ENCODE measurements at regions of chr1 and their contacts with region 1.

Region 1: GRCh38 chr1:26787706-26788514 is at the start of gene PIGV:
- DNase-seq: peak; percentile 90
- H3K4me3 ChIP-seq: peak within 1 kb of the TSS; percentile 51 to 76 (median 52)
- H3K27ac ChIP-seq: peak within 1 kb of the TSS; percentile 69
- H3K4me1 ChIP-seq: peaks cover 48% of the 10 kb centered on the region
- H3K27me3 ChIP-seq: no peaks in the 10 kb centered on the region
- CTCF ChIP-seq: peak in 1 of 2 donors; percentile 23
- POLR2A ChIP-seq: peak; percentile 91
- total RNA-seq, gene PIGV: 6.0 and 7.5 TPM in 2 replicates

Region 2: GRCh38 chr1:26233903-26234643 is 553.8 kb before region 1 on chr1 and contains the start of gene CEP85:
- CTCF ChIA-PET with region 1: no interaction called
- POLR2A ChIA-PET with region 1: no interaction called
- dilution Hi-C with region 1: no loop called
- intact Hi-C with region 1: no loop called
- DNase-seq: peak; percentile 98
- H3K4me3 ChIP-seq: peak within 1 kb of the TSS; percentile 35 to 78 (median 65)
- H3K27ac ChIP-seq: peak within 1 kb of the TSS; percentile 9
- H3K4me1 ChIP-seq: peaks cover 12% of the 10 kb centered on the region
- H3K27me3 ChIP-seq: no peaks in the 10 kb centered on the region
- CTCF ChIP-seq: peak; percentile 87 to 92
- POLR2A ChIP-seq: peak; percentile 81
- total RNA-seq, gene CEP85: 16.2 and 17.8 TPM in 2 replicates

Region 3: DNA sequence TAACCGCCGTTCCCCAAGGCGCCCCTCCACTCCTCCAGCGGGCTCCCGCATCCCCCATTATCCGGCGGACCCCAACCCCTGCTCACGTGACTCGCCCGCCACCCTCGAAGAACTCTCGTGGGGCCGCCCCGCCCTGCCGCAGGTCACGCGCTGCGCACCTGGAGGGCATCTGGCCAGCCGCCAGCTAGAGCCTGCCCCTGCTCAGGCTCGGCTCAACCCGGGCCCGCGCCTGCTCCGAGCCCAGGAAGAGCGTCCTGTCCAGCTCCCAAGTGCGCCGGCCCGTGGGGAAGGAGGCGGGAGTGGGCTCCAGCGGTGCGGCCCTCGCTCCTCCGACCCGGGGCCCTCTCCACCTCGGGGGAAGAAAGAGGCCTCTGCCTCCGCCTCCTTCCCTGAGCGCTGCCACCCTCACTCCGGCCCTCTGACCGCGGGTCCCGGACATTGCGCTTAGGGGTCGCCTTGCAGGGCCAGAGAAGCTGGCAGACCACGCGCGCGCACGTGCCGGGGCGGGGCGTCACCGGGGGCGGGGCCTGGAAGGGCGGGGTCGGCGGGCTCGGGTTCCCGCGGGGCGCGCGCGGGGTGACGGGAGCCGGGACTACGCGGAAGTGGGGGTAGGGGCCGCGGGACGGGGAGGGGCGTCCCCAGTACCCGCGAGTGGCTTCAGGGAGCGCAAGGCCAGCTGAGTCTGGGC is 287.3 kb before region 1 on chr1:
- CTCF ChIA-PET with region 1: interaction called, 8 read pairs
- POLR2A ChIA-PET with region 1: no interaction called
- dilution Hi-C with region 1: no loop called
- intact Hi-C with region 1: loop called (anchors 2 kb)
- DNase-seq: peak; percentile 75
- H3K4me3 ChIP-seq: peak overlapping the region; percentile 57 to 82 (median 60)
- H3K27ac ChIP-seq: peak overlapping the region; percentile 40
- H3K4me1 ChIP-seq: peaks cover 12% of the 10 kb centered on the region
- H3K27me3 ChIP-seq: no peaks in the 10 kb centered on the region
- CTCF ChIP-seq: no peak
- POLR2A ChIP-seq: no peak

Region 4: DNA sequence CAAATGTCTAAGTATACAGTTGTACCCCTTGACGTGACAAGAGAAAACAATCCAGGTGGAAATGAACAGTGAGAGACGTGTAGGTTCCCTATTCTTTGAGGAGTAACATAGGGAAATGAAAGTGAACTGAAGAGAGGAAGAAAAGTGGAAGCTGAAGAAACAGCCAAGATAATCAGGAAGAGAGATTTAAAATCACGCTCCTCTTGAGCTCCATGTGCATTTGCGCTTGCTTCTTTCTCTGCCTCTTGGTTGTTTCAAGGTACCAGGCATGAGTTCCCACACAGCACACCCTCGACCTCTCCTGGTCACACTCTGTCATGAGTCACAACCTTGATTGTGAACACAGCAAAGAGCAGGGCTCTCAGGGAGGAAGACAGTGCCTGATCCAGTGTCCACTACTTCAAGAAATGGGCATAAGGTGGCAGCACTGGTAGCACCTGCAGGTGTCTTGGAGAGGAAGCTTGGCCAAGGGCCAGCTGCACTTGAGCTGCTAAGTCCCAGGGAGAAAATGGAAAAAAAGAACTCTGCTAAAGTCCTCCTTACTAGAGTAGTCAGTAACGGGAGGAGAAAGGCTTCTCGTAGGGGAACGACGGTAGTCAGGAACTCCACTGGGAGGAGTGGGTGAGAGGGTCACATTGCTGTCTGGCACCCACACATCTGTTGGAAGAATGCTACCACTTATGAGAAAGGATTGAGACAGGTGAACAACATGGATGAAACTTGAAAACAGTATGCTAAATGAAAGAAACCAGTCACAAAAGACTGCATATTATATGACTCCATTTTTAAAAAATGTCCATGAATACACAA is 110.4 kb before region 1 on chr1:
- CTCF ChIA-PET with region 1: interaction called, 78 read pairs
- POLR2A ChIA-PET with region 1: no interaction called
- dilution Hi-C with region 1: no loop called
- intact Hi-C with region 1: loop called (anchors 1 kb)
- DNase-seq: peak; percentile 88
- H3K4me3 ChIP-seq: no peak overlapping the region
- H3K27ac ChIP-seq: no peak overlapping the region
- H3K4me1 ChIP-seq: peaks cover 7% of the 10 kb centered on the region
- H3K27me3 ChIP-seq: no peaks in the 10 kb centered on the region
- CTCF ChIP-seq: peak; percentile 44 to 66
- POLR2A ChIP-seq: no peak

Region 5: DNA sequence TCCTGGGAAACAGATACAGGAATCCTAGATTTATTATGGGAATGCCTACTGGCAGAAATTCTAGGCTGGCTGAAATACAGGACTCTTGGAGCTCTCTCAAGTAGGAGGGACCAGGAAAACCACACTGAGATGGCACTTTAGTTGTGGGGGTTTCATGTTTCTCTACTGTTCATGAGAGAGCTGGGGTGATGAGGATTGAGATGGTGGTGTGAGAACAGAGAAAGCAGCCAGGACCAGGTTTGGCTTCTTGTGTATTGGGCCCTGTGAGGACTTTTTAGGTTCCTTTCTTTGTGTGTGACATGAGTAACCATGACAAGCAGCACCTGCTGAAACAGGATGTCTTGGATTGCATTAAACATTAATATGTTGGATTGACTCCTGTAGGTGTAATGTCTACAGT is 87.2 kb before region 1 on chr1:
- CTCF ChIA-PET with region 1: interaction called, 81 read pairs
- POLR2A ChIA-PET with region 1: no interaction called
- dilution Hi-C with region 1: loop called (anchors 5 kb)
- intact Hi-C with region 1: no loop called
- DNase-seq: no peak
- H3K4me3 ChIP-seq: no peak overlapping the region
- H3K27ac ChIP-seq: no peak overlapping the region
- H3K4me1 ChIP-seq: peaks cover 63% of the 10 kb centered on the region
- H3K27me3 ChIP-seq: no peaks in the 10 kb centered on the region
- CTCF ChIP-seq: no peak
- POLR2A ChIP-seq: no peak

Region 6: GRCh38 chr1:26723013-26723991 is 64.6 kb before region 1 on chr1:
- CTCF ChIA-PET with region 1: interaction called, 16 read pairs
- POLR2A ChIA-PET with region 1: interaction called, 3 read pairs
- dilution Hi-C with region 1: no loop called
- intact Hi-C with region 1: loop called (anchors 1 kb)
- DNase-seq: peak; percentile 99
- H3K4me3 ChIP-seq: no peak overlapping the region
- H3K27ac ChIP-seq: peak overlapping the region; percentile 67
- H3K4me1 ChIP-seq: peaks cover 33% of the 10 kb centered on the region
- H3K27me3 ChIP-seq: no peaks in the 10 kb centered on the region
- CTCF ChIP-seq: no peak
- POLR2A ChIP-seq: peak; percentile 47

Region 7: DNA sequence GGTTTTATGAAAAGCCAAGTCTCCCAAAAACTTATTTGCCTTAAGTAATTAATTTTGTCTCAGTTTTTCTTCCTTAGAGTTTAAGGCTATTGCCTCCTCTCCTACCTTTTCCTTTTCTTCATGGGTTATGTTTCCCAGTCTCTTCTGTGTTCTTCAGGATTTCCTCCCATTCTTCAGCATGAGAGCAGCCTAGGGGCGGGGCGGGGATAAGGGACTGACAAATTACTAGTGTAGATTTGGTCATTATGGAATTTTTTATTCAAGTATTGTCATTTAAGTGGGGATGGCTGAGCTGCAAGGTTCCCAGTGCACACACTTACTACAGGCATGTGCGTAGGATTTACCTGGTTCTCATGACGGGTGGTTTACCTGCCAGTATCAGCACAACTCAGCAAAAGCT is 35.4 kb before region 1 on chr1:
- CTCF ChIA-PET with region 1: interaction called, 11 read pairs
- POLR2A ChIA-PET with region 1: no interaction called
- dilution Hi-C with region 1: no loop called
- intact Hi-C with region 1: no loop called
- DNase-seq: peak; percentile 75
- H3K4me3 ChIP-seq: no peak overlapping the region
- H3K27ac ChIP-seq: peak overlapping the region; percentile 16
- H3K4me1 ChIP-seq: peaks cover 25% of the 10 kb centered on the region
- H3K27me3 ChIP-seq: no peaks in the 10 kb centered on the region
- CTCF ChIP-seq: no peak
- POLR2A ChIP-seq: no peak

Region 8: GRCh38 chr1:26799479-26800142 is 11.7 kb after region 1 on chr1:
- CTCF ChIA-PET with region 1: interaction called, 40 read pairs
- POLR2A ChIA-PET with region 1: no interaction called
- dilution Hi-C with region 1: no loop called
- intact Hi-C with region 1: no loop called
- DNase-seq: peak; percentile 55
- H3K4me3 ChIP-seq: peak overlapping the region in 1 of 3 experiments; percentile 57
- H3K27ac ChIP-seq: peak overlapping the region; percentile 72
- H3K4me1 ChIP-seq: peaks cover 12% of the 10 kb centered on the region
- H3K27me3 ChIP-seq: no peaks in the 10 kb centered on the region
- CTCF ChIP-seq: no peak
- POLR2A ChIP-seq: no peak

Region 9: DNA sequence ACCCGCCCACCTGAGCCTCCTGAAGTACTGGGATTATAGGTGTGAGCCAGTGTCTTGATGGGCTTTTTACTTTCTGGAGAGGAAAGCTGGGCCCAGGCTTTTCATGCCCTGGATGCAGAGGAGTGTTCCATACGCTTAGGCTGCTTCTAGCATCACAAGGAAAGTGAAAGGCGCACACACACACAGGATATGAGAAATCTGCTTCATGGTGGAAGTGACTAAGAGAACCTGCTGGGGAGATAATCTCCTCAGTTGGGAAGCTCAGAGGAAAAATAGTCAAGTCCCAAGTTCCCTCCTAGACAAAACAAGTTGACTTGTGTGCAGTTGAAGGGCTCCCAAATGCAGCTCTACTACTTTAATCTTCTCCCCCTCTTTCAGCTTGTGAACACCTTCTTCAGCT is 135.8 kb after region 1 on chr1:
- CTCF ChIA-PET with region 1: no interaction called
- POLR2A ChIA-PET with region 1: no interaction called
- dilution Hi-C with region 1: no loop called
- intact Hi-C with region 1: no loop called
- DNase-seq: peak; percentile 70
- H3K4me3 ChIP-seq: peak overlapping the region in 1 of 3 experiments; percentile 25
- H3K27ac ChIP-seq: peak overlapping the region; percentile 71
- H3K4me1 ChIP-seq: peaks cover 26% of the 10 kb centered on the region
- H3K27me3 ChIP-seq: no peaks in the 10 kb centered on the region
- CTCF ChIP-seq: no peak
- POLR2A ChIP-seq: no peak